ENCODE measurements at regions of chrX and their contacts with region 1.

Region 1: DNA sequence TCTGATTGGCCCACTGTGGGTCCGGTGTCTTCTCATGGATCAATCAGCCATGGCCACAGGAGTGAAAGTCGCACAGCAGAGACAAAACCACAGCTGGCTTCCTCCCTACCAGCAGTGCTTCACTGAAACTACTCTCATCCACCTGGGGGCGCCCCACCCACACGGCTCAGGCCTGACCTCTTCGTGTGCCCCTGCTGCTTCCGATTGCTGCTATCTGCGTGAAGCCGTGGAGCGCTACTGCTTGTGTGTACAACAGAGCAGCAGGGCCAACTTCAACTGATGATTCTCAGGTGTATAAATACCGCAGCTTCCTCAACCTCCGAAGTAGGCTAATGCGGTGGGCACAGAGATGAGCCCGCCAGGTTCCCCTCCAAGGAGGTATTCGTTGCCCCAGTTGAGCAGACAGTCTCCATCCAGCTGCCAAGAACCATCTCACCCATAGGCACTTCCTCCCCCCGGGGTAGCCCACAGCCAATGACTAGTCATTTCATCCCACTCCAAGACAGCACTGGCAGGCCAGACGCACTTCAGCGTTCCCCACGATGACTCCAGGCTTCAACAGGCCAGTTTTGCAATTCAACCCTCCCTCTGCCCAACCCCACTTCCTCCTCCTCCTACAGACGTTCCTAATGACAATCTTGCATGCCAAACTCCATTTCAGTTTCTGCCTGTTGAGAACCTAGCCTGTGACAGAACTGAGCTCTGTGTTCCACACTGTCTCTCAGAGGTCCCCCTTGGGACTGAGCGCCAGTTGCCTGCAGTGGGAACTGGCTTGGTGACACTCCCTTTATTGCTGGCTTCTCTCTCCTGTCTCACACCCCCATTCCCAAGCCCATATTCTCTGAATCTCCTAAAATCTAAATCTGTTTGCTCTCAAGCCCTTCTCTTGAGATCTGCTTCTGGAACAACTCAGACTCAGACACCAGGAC is 41.3 kb upstream of the ATP6AP2 start:
- DNase-seq: no peak

Region 2: DNA sequence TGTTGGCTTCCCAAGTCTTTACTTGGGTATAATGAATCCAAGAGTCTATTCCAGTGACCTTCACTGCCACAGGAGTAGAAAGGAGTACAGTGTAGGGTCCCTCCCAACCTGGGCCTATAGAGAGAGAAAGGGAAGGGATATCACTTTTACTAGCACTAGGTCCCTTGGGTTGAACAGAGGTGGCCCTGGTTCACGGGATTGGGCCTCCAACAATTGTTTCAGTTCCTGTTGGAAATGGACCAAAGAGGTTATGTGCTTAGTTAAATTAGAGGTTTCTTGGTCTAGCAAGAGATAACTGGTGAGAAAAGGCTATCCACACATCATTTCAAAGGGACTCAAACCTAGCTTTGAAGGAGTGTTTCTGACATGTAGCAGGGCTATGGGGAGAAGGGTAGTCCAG is 253.0 kb after region 1 on chrX:
- intact Hi-C with region 1: loop called (anchors 10 kb)
- DNase-seq: no peak

Region 3: DNA sequence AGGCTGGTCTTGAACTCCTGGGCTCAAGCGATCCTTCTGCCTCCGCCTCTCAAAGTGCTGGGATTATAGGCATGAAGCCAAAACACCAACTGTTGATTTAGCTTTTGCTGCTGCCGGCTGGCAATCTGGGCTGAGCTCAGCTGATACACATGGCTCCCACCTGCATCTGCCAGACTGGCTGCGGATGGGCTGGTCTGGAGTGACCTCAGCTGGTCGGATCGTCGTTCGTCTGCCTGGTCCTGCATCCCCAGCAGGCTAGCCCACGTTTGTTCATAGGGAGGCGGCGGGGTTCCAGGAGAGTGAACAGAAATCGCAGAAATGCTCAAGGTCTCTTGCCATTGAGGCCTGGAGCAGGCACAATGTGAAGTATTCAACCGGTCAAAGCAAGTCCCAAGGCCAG is 720.0 kb after region 1 on chrX:
- intact Hi-C with region 1: loop called (anchors 10 kb)
- DNase-seq: no peak